CD8-positive, alpha-beta T cell (primary cell): ENCODE measurements at regions of chr4 and their contacts with region 1.

Region 1: GRCh38 chr4:184649026-184649970 is at the starts of genes CASP3 and PRIMPOL:
- DNase-seq: peak; percentile 93 to 98 (median 95)
- ATAC-seq: peak; percentile 90
- H3K4me3 ChIP-seq: peak within 1 kb of the TSS; percentile 95 to 98
- H3K4me3 Mint-ChIP-seq: peak within 1 kb of the TSS; percentile 94
- H3K27ac ChIP-seq: peak within 1 kb of the TSS; percentile 77 to 87
- H3K27ac Mint-ChIP-seq: peak within 1 kb of the TSS; percentile 96
- H3K4me1 ChIP-seq: peaks cover 43% of the 10 kb centered on the region
- H3K4me1 Mint-ChIP-seq: peaks cover 54% of the 10 kb centered on the region
- H3K27me3 ChIP-seq: no peaks in the 10 kb centered on the region
- H3K27me3 Mint-ChIP-seq: no peaks in the 10 kb centered on the region
- CTCF ChIP-seq: no peak
- total RNA-seq, gene CASP3: 14.4 to 15.7 TPM
- total RNA-seq, gene PRIMPOL: 6.0 to 7.3 TPM

Region 2: DNA sequence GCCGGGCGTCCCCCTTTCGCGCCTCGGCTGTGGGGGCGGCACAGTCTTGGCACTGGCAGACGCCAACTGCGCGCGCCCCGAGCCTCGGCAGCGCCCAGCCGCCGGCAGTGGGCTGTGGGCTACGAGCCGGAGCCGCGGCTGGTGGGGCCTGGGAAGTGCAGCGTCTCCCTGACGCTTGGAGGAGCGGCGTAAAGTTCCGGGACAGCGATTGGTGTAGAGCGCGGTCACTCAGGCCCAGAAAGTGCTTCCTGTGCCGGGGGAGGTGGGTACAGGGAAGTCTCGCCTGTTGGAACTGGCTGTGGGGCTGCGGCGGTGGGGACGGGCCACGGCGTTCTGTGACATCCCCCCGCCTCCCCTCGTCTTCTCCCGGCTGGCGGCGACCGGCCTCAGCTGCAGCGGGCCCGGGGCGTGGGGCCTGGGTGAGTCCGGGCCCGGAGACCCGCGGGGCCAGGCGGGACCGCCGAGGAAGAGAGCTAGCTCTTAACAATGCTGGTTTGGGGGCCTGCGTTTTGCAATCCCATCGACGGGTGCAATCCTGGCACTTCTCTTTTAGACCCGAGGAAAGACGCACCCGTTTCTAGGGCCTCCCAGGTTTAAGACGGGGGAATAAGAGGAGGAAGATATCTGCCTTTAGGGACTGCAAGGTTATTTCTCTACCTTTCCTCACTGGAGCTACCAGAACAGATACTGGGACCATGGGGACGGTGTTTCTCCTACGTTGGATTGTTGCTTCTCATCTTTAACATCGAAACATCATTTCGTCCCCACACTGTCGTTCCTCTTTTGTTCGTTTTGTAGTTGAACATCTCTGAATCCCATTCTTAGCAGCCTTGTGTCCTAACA is 990.0 kb before region 1 on chr4 and contains the starts of genes RWDD4 and TRAPPC11:
- CTCF ChIA-PET with region 1: no interaction called
- POLR2A ChIA-PET with region 1: no interaction called
- intact Hi-C with region 1: loop called in 1 of 2 experiments (anchors 10 kb)
- DNase-seq: peak; percentile 90 to 99 (median 95)
- ATAC-seq: peak; percentile 96
- H3K4me3 ChIP-seq: peak within 1 kb of the TSS; percentile 72 to 83
- H3K4me3 Mint-ChIP-seq: peak within 1 kb of the TSS; percentile 92
- H3K27ac ChIP-seq: peak within 1 kb of the TSS; percentile 83 to 89
- H3K27ac Mint-ChIP-seq: peak within 1 kb of the TSS; percentile 91
- H3K4me1 ChIP-seq: peaks cover 25% of the 10 kb centered on the region
- H3K4me1 Mint-ChIP-seq: peaks cover 42% of the 10 kb centered on the region
- H3K27me3 ChIP-seq: no peaks in the 10 kb centered on the region
- H3K27me3 Mint-ChIP-seq: no peaks in the 10 kb centered on the region
- CTCF ChIP-seq: no peak
- total RNA-seq, gene RWDD4: 9.0 to 12.1 TPM
- total RNA-seq, gene TRAPPC11: 14.7 to 22.1 TPM

Region 3: DNA sequence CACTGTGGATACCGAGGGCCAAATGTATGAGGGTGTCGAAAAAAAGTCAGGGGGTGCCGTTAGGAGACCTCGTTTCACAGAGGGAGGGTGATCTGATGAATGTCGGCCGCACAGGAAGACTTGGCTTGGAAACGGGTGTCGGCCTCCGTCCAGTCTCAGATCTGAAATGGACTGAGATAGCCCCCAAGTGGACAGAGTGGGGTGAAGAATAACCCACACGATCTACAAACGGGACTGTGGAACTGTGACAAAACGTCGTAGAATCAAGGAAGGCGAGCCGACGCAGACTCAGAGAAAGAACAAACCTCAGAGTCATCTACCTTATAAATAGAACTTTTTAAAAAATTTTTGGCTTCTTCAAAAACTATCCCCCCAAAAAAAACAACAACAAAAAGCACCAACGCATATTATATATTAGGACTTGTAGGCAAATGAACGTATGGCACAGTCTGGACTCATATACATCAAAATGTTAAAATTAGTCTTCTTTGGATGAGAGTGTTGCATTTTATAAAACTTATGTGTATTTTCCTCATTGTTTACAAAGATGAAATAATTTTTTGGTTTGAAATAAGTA is 111.2 kb before region 1 on chr4:
- CTCF ChIA-PET with region 1: no interaction called
- POLR2A ChIA-PET with region 1: interaction called, 3 read pairs
- intact Hi-C with region 1: loop called (anchors 1 kb)
- DNase-seq: peak; percentile 38 to 88 (median 65)
- ATAC-seq: peak; percentile 45
- H3K4me3 ChIP-seq: peak overlapping the region; percentile 57 to 63
- H3K4me3 Mint-ChIP-seq: peak overlapping the region; percentile 91
- H3K27ac ChIP-seq: peak overlapping the region; percentile 84 to 90
- H3K27ac Mint-ChIP-seq: peak overlapping the region; percentile 100
- H3K4me1 ChIP-seq: peaks cover 33% of the 10 kb centered on the region
- H3K4me1 Mint-ChIP-seq: peaks cover 46% of the 10 kb centered on the region
- H3K27me3 ChIP-seq: no peaks in the 10 kb centered on the region
- H3K27me3 Mint-ChIP-seq: no peaks in the 10 kb centered on the region
- CTCF ChIP-seq: peak; percentile 36

Region 4: GRCh38 chr4:185142912-185143595 is 493.8 kb after region 1 on chr4 and contains the start of gene SLC25A4:
- CTCF ChIA-PET with region 1: no interaction called
- POLR2A ChIA-PET with region 1: no interaction called
- intact Hi-C with region 1: loop called in 1 of 2 experiments (anchors 10 kb)
- DNase-seq: peak; percentile 73 to 94 (median 86)
- ATAC-seq: peak; percentile 93
- H3K4me3 ChIP-seq: peak within 1 kb of the TSS; percentile 65 to 84
- H3K4me3 Mint-ChIP-seq: peak within 1 kb of the TSS; percentile 91
- H3K27ac ChIP-seq: peak within 1 kb of the TSS; percentile 51 to 62
- H3K27ac Mint-ChIP-seq: peak within 1 kb of the TSS; percentile 91
- H3K4me1 ChIP-seq: peaks cover 15% of the 10 kb centered on the region
- H3K4me1 Mint-ChIP-seq: peaks cover 20% of the 10 kb centered on the region
- H3K27me3 ChIP-seq: no peaks in the 10 kb centered on the region
- H3K27me3 Mint-ChIP-seq: peaks cover 8% of the 10 kb centered on the region
- CTCF ChIP-seq: peak; percentile 59
- total RNA-seq, gene SLC25A4: 10.0 to 11.0 TPM

Region 5: DNA sequence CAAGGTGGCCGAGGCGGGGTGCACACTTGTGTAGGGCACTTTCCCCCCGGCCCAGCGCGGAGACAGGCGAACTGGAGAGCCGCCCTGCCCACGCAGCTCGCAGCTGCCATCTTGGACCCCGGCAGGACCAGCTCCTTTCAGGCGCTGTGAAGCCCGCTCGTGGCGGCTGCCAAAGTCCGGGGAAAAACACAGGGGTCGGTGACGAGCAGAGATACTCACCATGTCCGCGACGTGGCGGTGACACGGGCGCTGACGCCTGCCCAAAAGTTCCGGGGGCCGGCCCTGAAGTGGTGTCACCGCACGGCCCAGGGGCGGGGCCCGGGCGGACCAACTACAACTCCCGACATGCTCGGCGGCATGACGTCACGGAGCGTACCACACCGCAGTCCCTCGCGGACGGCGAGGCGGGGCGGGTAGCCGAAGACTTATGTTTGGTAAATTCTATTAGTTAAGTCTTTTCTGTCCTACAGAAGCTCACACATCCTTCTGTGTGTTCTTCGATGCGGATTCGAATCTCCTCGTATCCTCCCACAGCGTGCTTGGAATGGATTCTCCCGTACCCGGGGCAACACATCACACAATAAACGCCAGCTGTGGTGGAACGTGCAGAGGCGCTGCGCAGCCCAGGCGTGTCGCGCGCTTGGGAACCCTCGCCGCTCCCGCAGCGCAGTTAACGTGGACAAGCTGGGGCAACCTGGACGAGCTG is 776.5 kb after region 1 on chr4 and contains the start of gene UFSP2:
- CTCF ChIA-PET with region 1: no interaction called
- POLR2A ChIA-PET with region 1: no interaction called
- intact Hi-C with region 1: loop called in 1 of 2 experiments (anchors 10 kb)
- DNase-seq: peak; percentile 75 to 97 (median 89)
- ATAC-seq: peak; percentile 86
- H3K4me3 ChIP-seq: peak within 1 kb of the TSS; percentile 87 to 90
- H3K4me3 Mint-ChIP-seq: peak within 1 kb of the TSS; percentile 83
- H3K27ac ChIP-seq: peak within 1 kb of the TSS; percentile 97 to 99
- H3K27ac Mint-ChIP-seq: peak within 1 kb of the TSS; percentile 100
- H3K4me1 ChIP-seq: peaks cover 18% of the 10 kb centered on the region
- H3K4me1 Mint-ChIP-seq: peaks cover 36% of the 10 kb centered on the region
- H3K27me3 ChIP-seq: no peaks in the 10 kb centered on the region
- H3K27me3 Mint-ChIP-seq: peaks cover 5% of the 10 kb centered on the region
- CTCF ChIP-seq: no peak
- total RNA-seq, gene UFSP2: 13.4 to 17.4 TPM

Region 6: DNA sequence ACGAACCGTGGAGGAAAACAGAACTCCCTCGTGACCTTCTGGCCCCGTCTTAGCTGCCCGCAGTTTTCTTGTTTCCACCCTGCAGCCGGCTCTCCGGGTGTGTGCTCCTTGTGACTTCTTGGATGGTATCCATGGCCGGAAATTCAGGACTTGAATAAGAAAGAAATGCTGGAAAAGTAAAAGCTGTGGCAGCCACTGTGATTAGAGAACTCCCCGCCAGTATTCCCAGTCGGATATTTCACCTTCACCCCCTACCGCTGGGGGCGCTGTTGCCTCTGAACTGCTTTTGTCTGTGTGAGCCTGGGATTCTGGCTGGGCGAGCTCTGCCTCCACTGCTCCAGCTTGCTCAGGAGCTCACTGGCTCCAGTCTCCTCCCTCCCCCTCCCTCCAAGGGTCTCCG is 1500.6 kb after region 1 on chr4:
- CTCF ChIA-PET with region 1: no interaction called
- POLR2A ChIA-PET with region 1: no interaction called
- intact Hi-C with region 1: no loop called
- DNase-seq: peak in 4 of 9 experiments; percentile 15 to 61 (median 42)
- ATAC-seq: no peak
- H3K4me3 ChIP-seq: no peak overlapping the region
- H3K4me3 Mint-ChIP-seq: no peak overlapping the region
- H3K27ac ChIP-seq: no peak overlapping the region
- H3K27ac Mint-ChIP-seq: no peak overlapping the region
- H3K4me1 ChIP-seq: peaks cover 6% of the 10 kb centered on the region
- H3K4me1 Mint-ChIP-seq: peaks cover 4% of the 10 kb centered on the region
- H3K27me3 ChIP-seq: peaks cover 8 to 9% of the 10 kb centered on the region in 2 experiments
- H3K27me3 Mint-ChIP-seq: peaks cover 38% of the 10 kb centered on the region
- CTCF ChIP-seq: peak; percentile 42